CD4-positive, alpha-beta memory T cell (primary cell): ENCODE measurements at regions of chr10 and their contacts with region 1.

Region 1: GRCh38 chr10:110610308-110610774 is 33.8 kb upstream of the RBM20 start:
- DNase-seq: peak; percentile 56 to 70 (median 63)
- H3K4me3 ChIP-seq: no peak overlapping the region
- H3K4me3 Mint-ChIP-seq: no peak overlapping the region
- H3K27ac ChIP-seq: no peak overlapping the region
- H3K27ac Mint-ChIP-seq: no peak overlapping the region
- H3K4me1 ChIP-seq: no peaks in the 10 kb centered on the region
- H3K4me1 Mint-ChIP-seq: peaks cover 0 to 17% (median 7%) of the 10 kb centered on the region in 4 donors
- H3K27me3 ChIP-seq: no peaks in the 10 kb centered on the region
- H3K27me3 Mint-ChIP-seq: no peaks in the 10 kb centered on the region

Region 2: GRCh38 chr10:110681023-110681681 is 70.8 kb after region 1 on chr10:
- CTCF ChIA-PET with region 1: interaction called, 7 read pairs
- POLR2A ChIA-PET with region 1: no interaction called
- intact Hi-C with region 1: loop called (anchors 1 kb)
- DNase-seq: peak in 4 of 5 donors; percentile 2 to 9 (median 7)
- H3K4me3 ChIP-seq: no peak overlapping the region
- H3K4me3 Mint-ChIP-seq: no peak overlapping the region
- H3K27ac ChIP-seq: no peak overlapping the region
- H3K27ac Mint-ChIP-seq: no peak overlapping the region
- H3K4me1 ChIP-seq: no peaks in the 10 kb centered on the region
- H3K4me1 Mint-ChIP-seq: no peaks in the 10 kb centered on the region
- H3K27me3 ChIP-seq: no peaks in the 10 kb centered on the region
- H3K27me3 Mint-ChIP-seq: peaks cover 3 to 9% of the 10 kb centered on the region in 2 donors

Region 3: DNA sequence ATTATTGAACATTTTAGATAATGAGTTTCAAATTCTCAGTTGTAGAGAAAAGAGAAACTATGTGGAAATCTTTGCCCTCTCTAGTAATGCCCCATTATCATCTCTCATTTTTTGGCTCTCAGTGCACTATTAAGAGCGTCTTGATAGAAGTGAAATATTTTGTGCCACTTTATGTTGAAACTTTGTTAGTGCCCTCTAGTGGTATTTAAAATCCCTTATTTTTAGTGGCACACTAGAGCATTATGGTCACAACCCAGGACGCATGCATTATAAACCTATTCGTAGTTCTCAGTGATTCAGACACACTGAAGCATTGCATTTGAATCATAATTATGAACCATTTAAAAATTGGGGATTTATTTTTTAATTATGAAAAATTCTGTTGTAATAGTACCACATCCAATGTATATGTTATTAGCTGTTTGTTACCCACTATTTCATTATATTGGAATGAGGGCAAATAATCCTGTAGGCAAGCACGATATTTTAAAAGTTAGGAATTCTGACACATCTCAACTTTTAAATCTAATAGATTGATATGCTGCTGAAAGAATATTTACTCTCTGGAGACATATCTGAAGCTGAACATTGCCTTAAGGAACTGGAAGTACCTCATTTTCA is 283.3 kb after region 1 on chr10:
- CTCF ChIA-PET with region 1: interaction called, 6 read pairs
- POLR2A ChIA-PET with region 1: no interaction called
- intact Hi-C with region 1: loop called (anchors 1 kb)
- DNase-seq: peak in 4 of 5 donors; percentile 60 to 66 (median 64)
- H3K4me3 ChIP-seq: no peak overlapping the region
- H3K4me3 Mint-ChIP-seq: no peak overlapping the region
- H3K27ac ChIP-seq: peak overlapping the region; percentile 6
- H3K27ac Mint-ChIP-seq: peak overlapping the region in 4 of 7 donors; percentile 0 to 43 (median 36)
- H3K4me1 ChIP-seq: peaks cover 49% of the 10 kb centered on the region
- H3K4me1 Mint-ChIP-seq: peaks cover 28 to 64% (median 50%) of the 10 kb centered on the region in 4 donors
- H3K27me3 ChIP-seq: no peaks in the 10 kb centered on the region
- H3K27me3 Mint-ChIP-seq: no peaks in the 10 kb centered on the region

Region 4: GRCh38 chr10:111004016-111004415 is 393.7 kb after region 1 on chr10:
- CTCF ChIA-PET with region 1: interaction called, 3 read pairs
- POLR2A ChIA-PET with region 1: no interaction called
- intact Hi-C with region 1: loop called (anchors 10 kb)
- DNase-seq: no peak
- H3K4me3 ChIP-seq: no peak overlapping the region
- H3K4me3 Mint-ChIP-seq: no peak overlapping the region
- H3K27ac ChIP-seq: no peak overlapping the region
- H3K27ac Mint-ChIP-seq: peak overlapping the region in 1 of 7 donors; percentile 41
- H3K4me1 ChIP-seq: no peaks in the 10 kb centered on the region
- H3K4me1 Mint-ChIP-seq: peaks cover 0 to 3% (median 0%) of the 10 kb centered on the region in 4 donors
- H3K27me3 ChIP-seq: no peaks in the 10 kb centered on the region
- H3K27me3 Mint-ChIP-seq: no peaks in the 10 kb centered on the region

Region 5: GRCh38 chr10:111598436-111599059 is 988.2 kb after region 1 on chr10:
- CTCF ChIA-PET with region 1: interaction called, 18 read pairs
- POLR2A ChIA-PET with region 1: interaction called, 3 read pairs
- intact Hi-C with region 1: no loop called
- DNase-seq: peak; percentile 31 to 51 (median 41)
- H3K4me3 ChIP-seq: no peak overlapping the region
- H3K4me3 Mint-ChIP-seq: no peak overlapping the region
- H3K27ac ChIP-seq: no peak overlapping the region
- H3K27ac Mint-ChIP-seq: no peak overlapping the region
- H3K4me1 ChIP-seq: no peaks in the 10 kb centered on the region
- H3K4me1 Mint-ChIP-seq: no peaks in the 10 kb centered on the region
- H3K27me3 ChIP-seq: no peaks in the 10 kb centered on the region
- H3K27me3 Mint-ChIP-seq: peaks cover 2 to 5% of the 10 kb centered on the region in 2 donors